Upper lobe of right lung (tissue), 1 donor: ENCODE measurements at regions of chr1 and their contacts with region 1.

Region 1: DNA sequence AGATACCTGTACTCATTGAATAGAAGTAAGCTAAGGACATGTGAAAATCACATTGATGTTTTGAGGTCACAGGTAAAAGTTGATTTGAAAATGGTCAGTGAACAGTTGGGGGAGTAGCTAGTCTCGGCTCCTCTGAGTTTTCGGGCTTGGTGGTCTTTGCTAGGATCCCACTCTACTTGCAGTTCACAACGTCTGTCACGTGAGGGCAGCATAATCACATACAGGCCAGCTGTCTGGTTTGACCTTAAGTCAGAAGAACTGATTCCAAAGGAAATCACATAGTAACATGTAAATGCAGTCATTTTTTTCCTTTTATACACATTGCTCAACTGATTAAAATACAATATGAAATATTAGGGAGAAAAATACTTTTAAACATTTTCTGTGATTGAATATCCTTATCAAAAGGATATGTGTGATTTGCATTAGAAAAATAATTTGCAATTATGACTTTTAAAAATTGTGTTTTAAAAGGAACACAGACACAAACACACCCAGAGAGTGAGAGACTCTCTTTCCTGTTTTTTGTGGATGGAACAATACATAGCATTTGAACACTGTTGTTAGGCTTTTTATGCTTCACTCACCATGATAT is 21.8 kb upstream of the PDC start:
- DNase-seq: no peak
- ATAC-seq: peak; percentile 91
- H3K4me3 ChIP-seq: no peak overlapping the region
- H3K27ac ChIP-seq: no peak overlapping the region
- H3K4me1 ChIP-seq: no peaks in the 10 kb centered on the region
- H3K27me3 ChIP-seq: no peaks in the 10 kb centered on the region
- CTCF ChIP-seq: peak; percentile 88

Region 2: DNA sequence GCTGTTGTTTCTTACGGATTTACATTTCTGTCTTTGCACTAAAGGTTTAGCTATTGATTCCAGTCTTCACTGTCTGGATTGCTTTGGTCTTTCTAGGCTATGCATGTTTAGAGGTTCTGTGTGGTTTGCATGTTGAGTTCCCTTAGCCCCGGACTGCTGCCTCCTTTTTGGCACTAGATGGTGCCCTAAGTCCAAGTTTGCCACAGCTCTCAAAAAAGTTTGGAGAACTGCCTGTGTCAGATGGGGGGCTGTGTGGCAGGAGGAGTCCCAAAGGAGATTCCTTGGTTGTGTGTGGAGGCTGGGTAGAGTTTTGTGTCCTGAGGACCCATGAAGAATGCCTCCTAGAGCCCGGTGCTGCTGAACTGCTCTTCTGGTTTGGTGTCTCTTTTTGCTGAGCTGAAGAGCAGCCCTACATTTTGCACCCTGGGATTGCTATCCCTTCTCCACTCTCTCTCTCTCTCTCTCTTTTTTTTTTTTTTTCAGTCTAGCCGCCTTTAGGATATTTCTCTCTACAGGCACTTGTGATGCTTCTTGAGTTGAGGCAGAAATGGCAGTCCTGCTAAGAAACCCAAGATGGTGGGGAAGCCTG is 123.1 kb after region 1 on chr1:
- intact Hi-C with region 1: loop called (anchors 10 kb)
- DNase-seq: no peak
- ATAC-seq: peak; percentile 91
- H3K4me3 ChIP-seq: no peak overlapping the region
- H3K27ac ChIP-seq: no peak overlapping the region
- H3K4me1 ChIP-seq: no peaks in the 10 kb centered on the region
- H3K27me3 ChIP-seq: no peaks in the 10 kb centered on the region
- CTCF ChIP-seq: peak; percentile 66

Region 3: DNA sequence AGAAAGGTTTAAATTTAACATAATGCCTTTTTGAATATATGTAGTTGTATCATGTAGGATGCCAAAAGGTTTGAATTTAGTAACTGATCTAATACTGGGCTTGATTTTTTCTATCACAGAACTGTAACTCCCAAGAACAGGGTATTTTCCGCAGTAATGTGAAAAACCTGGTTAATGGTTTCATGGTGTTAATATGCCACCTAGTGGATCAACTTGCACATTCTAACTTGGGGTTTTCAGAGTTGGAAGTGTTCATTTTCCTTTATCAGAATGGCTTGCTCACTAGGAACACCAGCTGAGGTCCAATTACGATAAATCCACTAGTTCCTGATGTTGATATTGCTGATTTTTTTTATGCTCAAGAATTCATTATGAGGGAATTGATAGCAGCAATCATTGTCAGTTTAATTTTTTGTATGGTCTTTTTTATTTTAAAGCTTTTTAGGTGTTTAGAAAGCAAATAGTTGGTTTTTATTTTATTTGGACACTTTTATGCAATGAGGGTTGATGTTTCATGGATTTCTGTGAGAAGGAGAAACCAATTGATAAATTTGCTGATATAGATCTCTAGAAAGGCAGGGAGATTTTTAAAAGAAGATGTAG is 503.2 kb after region 1 on chr1:
- intact Hi-C with region 1: loop called (anchors 10 kb)
- DNase-seq: no peak
- ATAC-seq: peak; percentile 85
- H3K4me3 ChIP-seq: no peak overlapping the region
- H3K27ac ChIP-seq: no peak overlapping the region
- H3K4me1 ChIP-seq: peaks cover 3% of the 10 kb centered on the region
- H3K27me3 ChIP-seq: no peaks in the 10 kb centered on the region
- CTCF ChIP-seq: peak; percentile 78